PC-9 (cell line): ENCODE measurements at regions of chr9 and their contacts with region 1.

Region 1: DNA sequence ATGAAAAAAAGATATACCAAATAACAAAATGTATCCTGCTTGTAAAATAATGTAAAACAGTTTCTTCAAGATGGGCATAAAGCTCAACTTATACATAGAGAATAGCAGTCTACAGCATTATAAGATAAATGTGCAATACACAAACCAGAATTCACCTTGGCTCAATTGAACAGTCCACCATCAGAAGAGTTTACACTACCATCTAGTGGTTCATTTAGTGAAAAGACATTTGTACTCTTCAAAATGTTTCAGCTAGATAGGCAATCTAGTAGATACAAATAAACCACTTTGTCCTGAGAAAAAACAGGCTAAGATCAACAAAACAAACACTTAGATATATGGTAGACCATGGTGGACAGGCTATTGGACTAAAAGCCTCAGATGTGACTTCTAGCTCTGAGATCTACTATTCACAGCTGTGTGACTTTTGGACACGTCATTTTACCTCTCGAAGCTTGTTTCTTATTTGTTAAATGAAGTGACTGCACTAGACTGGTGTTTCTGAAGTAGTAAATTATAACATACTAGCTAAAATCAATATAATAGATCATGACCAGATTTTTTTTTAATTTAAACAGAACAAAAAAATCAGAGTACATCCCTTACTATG is 22.1 kb upstream of the TPD52L3 start:
- DNase-seq: no peak
- H3K4me3 ChIP-seq: no peak overlapping the region
- H3K27ac ChIP-seq: no peak overlapping the region
- H3K4me1 ChIP-seq: peaks cover 14% of the 10 kb centered on the region
- H3K27me3 ChIP-seq: no peaks in the 10 kb centered on the region
- CTCF ChIP-seq: peak; percentile 64

Region 2: DNA sequence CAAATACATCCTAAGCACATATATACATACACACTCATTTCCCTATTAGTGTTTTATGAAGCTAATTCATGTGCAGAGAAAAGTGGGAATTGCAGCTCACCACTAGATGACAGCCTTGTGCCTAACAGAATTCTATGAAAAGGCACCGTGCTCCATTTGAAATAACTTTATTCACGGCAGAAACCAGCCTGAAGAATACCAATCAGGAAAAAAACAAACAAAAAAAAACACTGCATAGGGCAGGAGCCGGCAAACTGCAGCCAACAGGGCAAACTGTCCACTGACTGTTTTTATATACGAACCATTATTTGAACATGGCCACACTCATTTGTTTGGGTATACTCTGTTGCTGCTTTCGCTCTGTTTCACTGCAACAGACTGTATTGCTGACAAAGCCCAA is 506.7 kb before region 1 on chr9:
- CTCF ChIA-PET with region 1: no interaction called
- POLR2A ChIA-PET with region 1: no interaction called
- intact Hi-C with region 1: loop called (anchors 1 kb)
- DNase-seq: peak; percentile 7 to 46
- H3K4me3 ChIP-seq: no peak overlapping the region
- H3K27ac ChIP-seq: peak overlapping the region; percentile 39
- H3K4me1 ChIP-seq: peaks cover 15% of the 10 kb centered on the region; the same call in 1 of the 2 replicates
- H3K27me3 ChIP-seq: no peaks in the 10 kb centered on the region
- CTCF ChIP-seq: peak; percentile 74

Region 3: GRCh38 chr9:6215562-6215961 is 90.5 kb before region 1 on chr9 and contains the start of gene IL33:
- CTCF ChIA-PET with region 1: no interaction called
- POLR2A ChIA-PET with region 1: no interaction called
- intact Hi-C with region 1: loop called (anchors 10 kb)
- DNase-seq: no peak
- H3K4me3 ChIP-seq: no peak within 1 kb of the TSS
- H3K27ac ChIP-seq: no peak within 1 kb of the TSS
- H3K4me1 ChIP-seq: peaks cover 6% of the 10 kb centered on the region; the same call in 1 of the 2 replicates
- H3K27me3 ChIP-seq: no peaks in the 10 kb centered on the region
- CTCF ChIP-seq: no peak
- total RNA-seq, gene IL33: not detected in 2 replicates

Region 4: GRCh38 chr9:6328103-6328502 is 22.0 kb after region 1 on chr9 and contains the start of gene TPD52L3:
- CTCF ChIA-PET with region 1: no interaction called
- POLR2A ChIA-PET with region 1: no interaction called
- intact Hi-C with region 1: no loop called
- DNase-seq: no peak
- H3K4me3 ChIP-seq: no peak within 1 kb of the TSS
- H3K27ac ChIP-seq: no peak within 1 kb of the TSS
- H3K4me1 ChIP-seq: no peaks in the 10 kb centered on the region
- H3K27me3 ChIP-seq: no peaks in the 10 kb centered on the region
- CTCF ChIP-seq: no peak
- total RNA-seq, gene TPD52L3: not detected in 2 replicates